ENCODE measurements at regions of chr4 and their contacts with region 1.

Region 1: GRCh38 chr4:40199999-40200874 is 3.4 kb downstream of the RHOH start:
- DNase-seq: peak; percentile 90
- ATAC-seq: peak; percentile 53
- H3K4me3 Mint-ChIP-seq: peak overlapping the region; percentile 98
- H3K27ac Mint-ChIP-seq: peak overlapping the region; percentile 100
- H3K4me1 Mint-ChIP-seq: peaks cover 40% of the 10 kb centered on the region
- H3K27me3 Mint-ChIP-seq: no peaks in the 10 kb centered on the region

Region 2: DNA sequence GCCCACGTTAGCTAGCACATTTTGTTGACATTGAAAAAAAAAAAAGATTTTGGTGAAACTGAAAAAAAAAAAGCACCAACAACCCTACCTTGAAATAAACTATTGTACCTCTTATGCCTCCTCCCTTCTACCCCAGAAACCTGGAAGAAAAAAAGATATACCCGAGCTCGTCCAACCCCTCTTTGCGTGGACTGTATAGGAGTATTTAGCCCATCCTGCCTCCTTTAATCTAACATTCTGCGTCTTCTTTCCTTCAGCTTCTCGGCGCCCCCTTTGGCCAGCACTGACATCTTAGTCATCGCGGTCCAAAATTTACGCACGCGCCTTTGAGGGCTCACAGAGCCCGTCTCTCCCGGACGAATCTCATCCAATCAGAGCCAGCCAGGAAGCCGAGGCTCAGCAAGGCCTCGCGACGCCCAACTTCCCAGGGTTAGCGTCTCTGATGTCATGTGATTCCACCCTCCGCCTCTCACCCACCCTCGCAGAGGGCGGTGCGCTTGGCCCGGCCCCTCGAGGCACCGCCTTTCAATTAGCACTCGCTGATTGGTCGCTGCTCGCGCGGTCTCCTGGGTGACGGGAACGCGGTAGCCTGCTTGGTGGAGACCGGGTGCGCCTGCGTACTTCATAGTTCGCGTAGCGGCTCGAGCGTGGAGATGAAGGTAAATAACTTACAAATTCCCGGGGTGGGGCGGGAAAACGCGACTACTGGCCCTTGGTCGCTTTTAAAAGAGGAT is 1018.2 kb before region 1 on chr4 and contains the start of gene WDR19:
- CTCF ChIA-PET with region 1: no interaction called
- POLR2A ChIA-PET with region 1: no interaction called
- intact Hi-C with region 1: loop called in 1 of 2 experiments (anchors 10 kb)
- DNase-seq: peak; percentile 99
- ATAC-seq: peak; percentile 99
- H3K4me3 Mint-ChIP-seq: no peak within 1 kb of the TSS
- H3K27ac Mint-ChIP-seq: no peak within 1 kb of the TSS
- H3K4me1 Mint-ChIP-seq: peaks cover 8% of the 10 kb centered on the region
- H3K27me3 Mint-ChIP-seq: peaks cover 3% of the 10 kb centered on the region
- total RNA-seq, gene WDR19: 12.1 to 16.2 TPM

Region 3: DNA sequence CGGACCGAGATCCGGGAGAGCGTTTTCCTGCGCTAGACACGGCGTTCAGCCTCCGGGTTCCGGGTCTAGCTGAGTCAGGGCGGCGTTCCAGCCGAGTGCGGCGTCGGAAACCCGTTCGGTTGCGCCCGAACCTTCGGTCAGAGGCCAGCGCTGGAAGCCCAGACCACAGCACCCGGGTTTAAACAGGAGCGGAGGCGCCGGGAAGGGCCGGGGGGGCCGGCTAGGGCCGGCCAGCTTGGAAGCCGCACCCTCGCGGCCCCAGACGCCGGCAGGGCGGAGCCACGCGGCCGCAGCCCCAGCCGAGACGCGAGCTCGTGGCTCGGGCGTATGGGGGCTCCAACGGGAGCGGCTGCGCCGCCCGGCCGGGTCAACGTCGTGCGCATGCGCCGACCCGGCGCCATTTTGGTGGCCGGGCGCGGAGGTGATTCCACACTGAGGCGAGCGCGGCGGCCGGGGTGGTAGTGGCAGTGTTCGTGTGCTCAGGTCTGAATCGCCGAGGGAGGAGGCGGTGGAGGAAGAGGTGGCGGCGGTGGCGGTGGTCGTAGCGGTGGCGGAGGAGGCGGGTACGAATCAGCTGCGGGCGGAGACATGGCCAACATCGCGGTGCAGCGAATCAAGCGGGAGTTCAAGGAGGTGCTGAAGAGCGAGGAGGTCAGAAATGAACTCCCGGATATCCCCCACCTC is 502.4 kb before region 1 on chr4 and contains the start of gene UBE2K:
- CTCF ChIA-PET with region 1: no interaction called
- POLR2A ChIA-PET with region 1: no interaction called
- intact Hi-C with region 1: loop called in 1 of 2 experiments (anchors 5 kb)
- DNase-seq: peak; percentile 93
- ATAC-seq: peak; percentile 87
- H3K4me3 Mint-ChIP-seq: peak within 1 kb of the TSS; percentile 99
- H3K27ac Mint-ChIP-seq: peak within 1 kb of the TSS; percentile 99
- H3K4me1 Mint-ChIP-seq: peaks cover 28% of the 10 kb centered on the region
- H3K27me3 Mint-ChIP-seq: no peaks in the 10 kb centered on the region
- total RNA-seq, gene UBE2K: 87.2 to 122 TPM

Region 4: DNA sequence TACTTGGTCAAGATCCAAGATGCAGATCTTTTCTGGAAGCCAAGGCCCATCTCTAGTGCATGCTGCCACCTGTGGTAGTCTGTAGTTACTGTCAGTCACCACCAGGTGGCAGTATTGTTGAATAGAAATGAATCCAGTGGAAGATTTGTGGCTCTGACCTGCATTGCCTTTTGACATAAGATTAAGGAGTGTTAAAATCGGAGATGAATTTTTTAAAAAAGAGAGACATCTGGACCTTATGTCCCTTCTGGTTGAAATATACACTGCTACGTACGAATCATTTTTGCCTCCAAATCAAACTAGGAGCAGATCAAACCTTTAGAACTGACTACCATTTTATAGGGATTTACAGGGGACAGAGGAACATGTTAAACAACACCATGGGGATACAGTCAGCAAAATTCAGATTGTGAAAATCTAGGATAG is 50.3 kb before region 1 on chr4:
- CTCF ChIA-PET with region 1: interaction called, 8 read pairs
- POLR2A ChIA-PET with region 1: interaction called, 3 read pairs
- intact Hi-C with region 1: loop called (anchors 2 kb)
- DNase-seq: peak; percentile 80
- ATAC-seq: peak; percentile 96
- H3K4me3 Mint-ChIP-seq: no peak overlapping the region
- H3K27ac Mint-ChIP-seq: peak overlapping the region; percentile 61
- H3K4me1 Mint-ChIP-seq: peaks cover 33% of the 10 kb centered on the region
- H3K27me3 Mint-ChIP-seq: no peaks in the 10 kb centered on the region

Region 5: DNA sequence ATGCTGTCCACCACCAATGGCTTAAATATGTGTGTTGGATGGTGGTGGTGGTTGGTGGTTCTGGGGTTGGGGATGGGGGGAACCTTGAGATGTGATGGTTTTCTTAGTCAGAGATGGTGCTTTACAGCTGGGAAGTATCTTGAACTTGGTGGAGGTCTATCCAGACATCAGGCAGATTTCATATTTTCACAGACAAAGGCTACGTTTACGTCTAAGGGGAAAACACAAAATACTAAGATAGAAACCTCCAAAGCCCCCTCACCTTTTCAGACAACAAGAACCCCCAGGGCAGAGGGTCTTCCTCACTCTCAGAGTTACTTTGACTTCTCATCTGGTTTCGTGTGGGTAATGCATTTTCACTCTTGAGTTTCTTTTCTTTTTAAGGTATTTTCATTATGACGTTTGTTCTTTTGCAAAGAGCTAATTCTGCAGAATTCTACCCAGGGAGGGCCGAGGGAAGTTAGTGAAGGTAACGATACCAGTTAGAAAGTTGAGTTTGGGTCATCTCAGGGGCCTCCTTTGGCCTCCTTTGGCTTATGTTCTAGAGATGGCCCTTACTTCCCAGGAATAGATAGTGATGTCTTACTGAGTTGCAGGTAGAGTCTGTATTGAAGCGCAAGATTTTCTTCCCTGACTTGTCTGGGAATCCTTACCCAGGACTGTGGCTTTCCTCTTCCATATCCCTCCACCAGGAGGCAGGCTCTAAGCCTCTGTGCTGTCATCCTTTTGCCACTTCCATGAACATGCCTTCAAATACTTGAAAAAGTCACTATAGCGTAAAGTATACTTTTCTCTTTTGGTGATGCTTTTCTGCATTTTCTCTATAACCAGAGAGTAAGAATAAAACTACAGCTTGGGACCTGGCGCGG is 28.5 kb after region 1 on chr4:
- CTCF ChIA-PET with region 1: interaction called, 14 read pairs
- POLR2A ChIA-PET with region 1: interaction called, 29 read pairs
- intact Hi-C with region 1: loop called (anchors 1 kb)
- DNase-seq: peak; percentile 64
- ATAC-seq: peak; percentile 34
- H3K4me3 Mint-ChIP-seq: peak overlapping the region; percentile 61
- H3K27ac Mint-ChIP-seq: peak overlapping the region; percentile 96
- H3K4me1 Mint-ChIP-seq: peaks cover 93% of the 10 kb centered on the region
- H3K27me3 Mint-ChIP-seq: no peaks in the 10 kb centered on the region

Region 6: DNA sequence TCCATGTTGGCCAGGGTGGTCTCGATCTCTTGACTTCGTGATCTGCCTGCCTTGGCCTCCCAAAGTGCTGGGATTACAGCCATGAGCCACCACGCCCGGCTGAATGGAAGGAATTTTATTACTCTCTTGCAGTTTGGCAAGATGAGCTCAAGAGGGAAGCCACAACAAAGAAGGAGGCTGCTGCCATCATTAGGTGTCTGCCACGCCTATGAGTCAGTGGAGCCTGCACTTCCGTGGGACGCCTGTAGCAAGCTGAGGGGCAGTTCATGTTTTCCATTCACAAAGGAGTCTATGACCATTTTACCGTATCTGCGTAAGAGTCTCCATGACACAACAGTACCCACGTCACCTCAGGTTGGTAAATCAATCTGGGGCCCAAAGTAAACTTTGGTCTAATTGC is 83.7 kb after region 1 on chr4:
- CTCF ChIA-PET with region 1: no interaction called
- POLR2A ChIA-PET with region 1: interaction called, 9 read pairs
- intact Hi-C with region 1: loop called in 1 of 2 experiments (anchors 1 kb)
- DNase-seq: peak; percentile 89
- ATAC-seq: peak; percentile 94
- H3K4me3 Mint-ChIP-seq: peak overlapping the region; percentile 38
- H3K27ac Mint-ChIP-seq: peak overlapping the region; percentile 96
- H3K4me1 Mint-ChIP-seq: peaks cover 60% of the 10 kb centered on the region
- H3K27me3 Mint-ChIP-seq: no peaks in the 10 kb centered on the region

Region 7: GRCh38 chr4:40719008-40719623 is 518.9 kb after region 1 on chr4:
- CTCF ChIA-PET with region 1: no interaction called
- POLR2A ChIA-PET with region 1: no interaction called
- intact Hi-C with region 1: loop called in 1 of 2 experiments (anchors 2 kb)
- DNase-seq: peak; percentile 17
- ATAC-seq: peak; percentile 66
- H3K4me3 Mint-ChIP-seq: no peak overlapping the region
- H3K27ac Mint-ChIP-seq: peak overlapping the region; percentile 40
- H3K4me1 Mint-ChIP-seq: peaks cover 15% of the 10 kb centered on the region
- H3K27me3 Mint-ChIP-seq: no peaks in the 10 kb centered on the region